ENCODE measurements at regions of chr1 and their contacts with region 1.

Region 1: DNA sequence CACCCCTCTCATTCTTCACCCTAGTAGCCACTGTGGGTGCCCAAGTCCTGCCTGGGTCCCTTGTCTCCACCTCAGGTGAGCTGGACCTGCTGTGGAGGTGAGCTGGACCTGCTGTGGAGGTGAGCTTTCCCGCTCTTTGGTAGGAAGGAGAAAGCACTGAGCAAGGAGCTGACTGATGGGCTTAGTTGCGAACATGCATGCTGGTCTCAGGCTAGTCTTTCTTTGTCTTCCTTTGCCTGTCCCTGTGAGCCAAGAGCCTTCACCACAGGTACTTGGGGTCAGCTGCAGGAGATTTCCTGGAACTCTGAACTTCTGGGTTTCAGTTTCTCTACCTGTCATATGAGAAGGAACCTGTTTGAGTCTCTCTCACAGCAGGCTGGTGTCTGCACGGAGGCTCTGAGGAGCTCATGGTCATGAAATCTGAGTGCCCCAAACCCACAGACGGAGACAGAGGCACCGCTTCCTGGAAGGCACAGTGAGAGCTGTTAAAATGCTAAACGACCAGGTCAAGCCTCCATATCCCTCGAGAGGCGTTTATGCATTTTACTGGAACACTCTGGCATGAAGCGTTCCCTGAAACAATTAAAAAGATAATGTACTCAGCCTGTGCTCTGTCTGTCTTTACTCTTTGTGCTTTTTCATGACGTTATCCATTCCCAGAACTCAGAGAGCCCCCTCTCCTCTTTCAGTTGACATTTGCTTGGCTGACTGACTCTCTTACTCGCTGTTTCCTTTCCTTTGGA is 69.6 kb downstream of the RHOU start:
- DNase-seq: no peak
- H3K4me3 ChIP-seq: no peak overlapping the region
- H3K27ac ChIP-seq: peak overlapping the region in 2 of 4 donors; percentile 3 to 8
- H3K4me1 ChIP-seq: peaks cover 6 to 34% (median 11%) of the 10 kb centered on the region in 4 donors
- H3K27me3 ChIP-seq: no peaks in the 10 kb centered on the region
- CTCF ChIP-seq: no peak
- EP300 ChIP-seq: peak; percentile 91
- POLR2A ChIP-seq: no peak

Region 2: DNA sequence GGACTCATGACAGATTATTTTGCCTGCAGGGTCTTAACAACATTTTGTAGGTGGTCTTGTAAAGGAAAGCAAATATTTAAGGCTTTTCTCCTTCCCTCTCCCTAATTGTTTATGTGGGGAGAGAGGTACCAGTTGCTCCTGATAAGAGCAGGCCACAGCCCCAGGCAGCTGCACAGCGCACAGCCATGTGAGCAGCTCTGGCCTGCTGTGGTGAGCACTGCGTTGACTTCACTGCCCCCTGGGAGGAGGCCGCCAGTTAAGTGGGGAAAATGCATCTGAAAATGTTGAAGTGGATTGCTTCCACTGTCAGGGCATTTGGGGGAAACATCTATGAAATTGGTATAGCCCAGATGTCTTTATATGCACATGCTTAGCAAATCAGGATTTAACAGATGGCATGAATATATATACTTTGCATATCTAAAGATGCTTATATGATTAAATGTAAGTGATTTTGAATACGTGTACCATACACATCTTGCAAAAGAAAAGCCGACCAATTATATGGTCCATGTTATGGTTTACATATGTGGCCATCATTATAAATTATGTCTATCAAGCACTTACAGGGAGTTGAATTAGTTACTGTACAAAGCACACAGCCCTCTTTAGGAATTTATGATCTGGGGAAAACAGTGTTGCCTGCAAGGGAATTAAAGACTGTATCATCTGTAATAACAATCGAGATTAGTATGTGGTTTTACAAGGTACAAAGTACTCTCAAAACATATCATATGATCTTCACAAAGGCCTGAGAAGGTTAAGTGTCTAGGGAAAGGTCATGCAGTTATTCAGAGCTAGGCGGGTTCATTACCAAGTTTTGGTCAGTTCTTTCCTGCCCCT is 62.5 kb after region 1 on chr1:
- in situ Hi-C with region 1: no loop called
- intact Hi-C with region 1: no loop called
- DNase-seq: no peak
- H3K4me3 ChIP-seq: no peak overlapping the region
- H3K27ac ChIP-seq: no peak overlapping the region
- H3K4me1 ChIP-seq: peaks cover 0 to 36% (median 4%) of the 10 kb centered on the region in 4 donors
- H3K27me3 ChIP-seq: no peaks in the 10 kb centered on the region
- CTCF ChIP-seq: no peak
- EP300 ChIP-seq: no peak
- POLR2A ChIP-seq: no peak

Region 3: GRCh38 chr1:228902781-228903433 is 98.1 kb after region 1 on chr1:
- in situ Hi-C with region 1: no loop called
- intact Hi-C with region 1: loop called (anchors 10 kb)
- DNase-seq: peak; percentile 85
- H3K4me3 ChIP-seq: no peak overlapping the region
- H3K27ac ChIP-seq: peak overlapping the region; percentile 52 to 75 (median 61)
- H3K4me1 ChIP-seq: peaks cover 17 to 46% (median 19%) of the 10 kb centered on the region in 4 donors
- H3K27me3 ChIP-seq: no peaks in the 10 kb centered on the region
- CTCF ChIP-seq: no peak
- EP300 ChIP-seq: no peak
- POLR2A ChIP-seq: no peak

Region 4: GRCh38 chr1:229341774-229342655 is 537.2 kb after region 1 on chr1:
- in situ Hi-C with region 1: no loop called
- intact Hi-C with region 1: no loop called
- DNase-seq: peak; percentile 92
- H3K4me3 ChIP-seq: peak overlapping the region; percentile 68 to 98 (median 84)
- H3K27ac ChIP-seq: peak overlapping the region; percentile 90 to 96 (median 94)
- H3K4me1 ChIP-seq: peaks cover 0 to 28% (median 15%) of the 10 kb centered on the region in 4 donors
- H3K27me3 ChIP-seq: peaks cover 14% of the 10 kb centered on the region
- CTCF ChIP-seq: no peak
- EP300 ChIP-seq: no peak
- POLR2A ChIP-seq: peak; percentile 52